WTC11 (cell line): ENCODE measurements at regions of chr19 and their contacts with region 1.

Region 1: DNA sequence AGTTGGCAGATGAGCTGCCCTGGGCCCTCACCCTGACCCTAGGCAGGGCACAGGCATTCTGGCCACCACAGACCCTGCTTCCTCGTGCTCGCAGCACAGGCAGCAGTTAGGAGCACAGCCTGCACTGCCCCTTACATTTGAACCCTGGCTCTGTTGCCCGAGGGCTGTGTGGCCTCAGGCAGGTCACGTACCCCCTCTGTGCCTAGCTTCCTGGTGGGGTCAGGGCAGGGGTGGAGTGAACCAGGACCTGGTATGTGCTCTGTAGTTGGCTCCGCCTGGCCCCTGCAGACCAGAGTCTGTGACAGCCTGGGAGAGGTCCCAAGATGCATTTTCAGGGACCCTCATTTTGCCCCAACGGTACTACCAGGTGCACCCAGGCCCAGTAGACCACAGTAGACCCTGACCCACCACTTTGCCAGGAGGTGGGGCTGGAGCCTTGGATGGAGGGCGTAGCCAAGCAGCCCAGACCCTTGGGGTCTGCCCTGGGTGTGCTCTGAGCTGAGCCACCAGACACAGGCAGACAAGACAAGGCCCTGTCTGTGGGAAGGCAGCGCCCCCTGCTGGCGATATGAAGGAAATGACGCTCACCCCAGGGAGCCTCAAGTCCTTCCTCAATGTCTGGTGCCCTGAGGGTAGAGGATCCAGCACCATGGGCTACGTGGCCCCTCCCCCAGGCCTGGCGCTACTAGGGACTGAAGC is 9.1 kb downstream of the LYL1 start:
- DNase-seq: peak; percentile 84
- ATAC-seq: peak; percentile 41
- H3K4me3 Mint-ChIP-seq: no peak overlapping the region; the same call in 1 of the 2 replicates
- H3K27ac Mint-ChIP-seq: no peak overlapping the region
- H3K4me1 Mint-ChIP-seq: peaks cover 39% of the 10 kb centered on the region
- H3K27me3 Mint-ChIP-seq: peaks cover 52% of the 10 kb centered on the region
- CTCF ChIP-seq: peak; percentile 100

Region 2: GRCh38 chr19:12881172-12881808 is 212.3 kb before region 1 on chr19 and contains the start of gene DNASE2:
- CTCF ChIA-PET with region 1: interaction called, 10 read pairs
- POLR2A ChIA-PET with region 1: interaction called, 3 read pairs
- DNase-seq: peak; percentile 97
- ATAC-seq: peak; percentile 66
- H3K4me3 Mint-ChIP-seq: peak within 1 kb of the TSS; percentile 90
- H3K27ac Mint-ChIP-seq: peak within 1 kb of the TSS; percentile 94
- H3K4me1 Mint-ChIP-seq: peaks cover 8% of the 10 kb centered on the region
- H3K27me3 Mint-ChIP-seq: peaks cover 30% of the 10 kb centered on the region
- CTCF ChIP-seq: no peak
- total RNA-seq, gene DNASE2: 31.7 to 35.7 TPM (median 33.4 TPM) in 3 replicates

Region 3: GRCh38 chr19:12930002-12930653 is 163.4 kb before region 1 on chr19:
- CTCF ChIA-PET with region 1: no interaction called
- POLR2A ChIA-PET with region 1: no interaction called
- DNase-seq: no peak
- ATAC-seq: no peak
- H3K4me3 Mint-ChIP-seq: no peak overlapping the region
- H3K27ac Mint-ChIP-seq: no peak overlapping the region
- H3K4me1 Mint-ChIP-seq: peaks cover 16% of the 10 kb centered on the region
- H3K27me3 Mint-ChIP-seq: no peaks in the 10 kb centered on the region
- CTCF ChIP-seq: no peak

Region 4: DNA sequence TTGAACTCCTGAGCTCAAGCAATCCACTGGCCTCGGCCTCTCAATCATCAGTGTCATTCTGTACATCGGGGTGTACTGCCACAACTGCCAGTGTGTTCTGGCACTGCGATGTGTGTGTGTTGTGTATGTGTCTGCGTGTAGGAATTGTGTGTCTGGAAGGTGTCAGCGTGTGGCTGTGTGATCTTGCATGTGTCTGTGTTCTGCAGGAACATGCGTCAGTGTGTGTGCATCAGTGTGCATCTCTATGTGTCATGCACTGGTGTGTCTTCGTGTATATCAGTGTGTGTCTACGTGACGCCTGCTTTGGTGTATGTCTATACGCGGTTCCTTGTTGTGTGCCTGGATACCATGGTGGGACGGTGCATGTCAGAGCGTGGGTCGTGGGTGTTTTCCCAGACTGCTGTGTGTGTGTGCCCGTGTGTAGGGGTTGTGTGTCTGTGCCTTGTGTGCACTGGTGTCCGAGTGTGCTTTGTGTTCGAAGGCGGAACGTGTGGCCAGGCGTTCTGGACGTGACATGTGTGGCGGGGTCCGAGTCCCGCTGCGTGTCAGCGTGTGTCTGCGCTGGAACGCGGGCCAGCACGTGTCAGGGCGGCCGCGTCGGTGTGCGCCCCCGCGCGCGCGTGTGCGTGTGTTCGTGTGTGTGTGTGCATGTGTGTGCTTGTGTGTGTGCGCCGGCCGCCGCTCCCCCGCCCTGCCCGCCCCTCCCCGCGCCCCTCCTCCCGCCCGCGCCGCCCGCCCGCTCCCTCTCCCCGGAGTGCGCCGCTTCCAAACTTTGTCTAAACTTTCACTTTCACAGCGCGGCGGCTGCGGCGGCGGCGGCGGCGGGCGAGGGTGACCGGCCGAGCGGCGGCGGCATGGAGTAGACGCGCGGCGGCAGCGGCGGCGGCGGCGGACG is 98.6 kb before region 1 on chr19 and contains the start of gene NFIX:
- CTCF ChIA-PET with region 1: interaction called, 11 read pairs
- POLR2A ChIA-PET with region 1: no interaction called
- DNase-seq: no peak
- ATAC-seq: no peak
- H3K4me3 Mint-ChIP-seq: peak within 1 kb of the TSS; percentile 70
- H3K27ac Mint-ChIP-seq: no peak within 1 kb of the TSS
- H3K4me1 Mint-ChIP-seq: peaks cover 9% of the 10 kb centered on the region
- H3K27me3 Mint-ChIP-seq: peaks cover 90% of the 10 kb centered on the region
- CTCF ChIP-seq: no peak
- total RNA-seq, gene NFIX: 0.44 to 1.5 TPM (median 1.4 TPM) in 3 replicates

Region 5: GRCh38 chr19:13012690-13013608 is 80.6 kb before region 1 on chr19:
- CTCF ChIA-PET with region 1: interaction called, 12 read pairs
- POLR2A ChIA-PET with region 1: interaction called, 3 read pairs
- DNase-seq: peak; percentile 44
- ATAC-seq: no peak
- H3K4me3 Mint-ChIP-seq: peak overlapping the region; percentile 58
- H3K27ac Mint-ChIP-seq: no peak overlapping the region
- H3K4me1 Mint-ChIP-seq: peaks cover 59% of the 10 kb centered on the region
- H3K27me3 Mint-ChIP-seq: peaks cover 100% of the 10 kb centered on the region
- CTCF ChIP-seq: no peak

Region 6: DNA sequence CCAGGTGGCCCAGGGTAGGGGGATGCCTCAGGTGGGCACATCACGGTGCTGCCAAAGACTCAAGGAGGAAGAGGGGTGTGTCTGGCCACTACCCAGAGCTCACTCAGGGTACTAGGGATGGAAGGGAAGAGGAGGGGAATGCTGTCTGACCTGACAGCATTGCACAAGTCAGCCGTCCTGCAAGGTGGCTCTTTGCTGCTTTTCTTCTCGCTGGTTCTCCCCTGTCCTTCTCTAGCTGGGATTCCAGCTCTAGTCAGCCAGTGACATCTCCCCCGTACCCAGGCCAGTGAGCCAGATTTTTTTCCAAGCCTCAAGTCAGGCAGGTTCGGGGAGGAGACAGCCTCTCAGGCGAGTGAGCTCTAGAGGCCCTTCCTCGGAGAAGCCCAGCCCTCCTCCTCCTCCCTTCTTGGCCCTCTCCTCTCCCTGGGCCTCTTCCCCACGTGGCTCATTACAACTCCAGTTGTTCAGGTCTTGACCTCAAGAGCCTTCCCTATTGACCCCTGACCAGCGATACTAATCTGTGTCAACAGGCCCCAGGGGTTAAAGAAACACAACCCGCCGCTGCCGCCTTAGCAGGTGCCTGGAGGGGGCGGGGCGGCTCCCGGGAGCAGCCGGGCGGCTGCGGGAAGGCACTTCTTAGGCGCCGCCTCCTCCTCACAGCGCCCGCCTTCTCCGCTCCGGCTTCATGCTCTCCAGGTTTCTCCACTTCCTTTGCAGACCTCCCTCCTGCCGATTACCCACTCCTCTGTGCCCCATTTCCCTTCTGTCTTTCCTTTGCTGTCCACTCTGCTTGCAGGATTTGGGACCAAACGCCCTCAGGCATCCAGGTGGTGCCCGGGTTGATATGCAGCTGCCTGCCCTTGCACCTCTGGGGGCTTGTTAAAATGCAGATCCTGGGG is 42.0 kb before region 1 on chr19:
- CTCF ChIA-PET with region 1: interaction called, 177 read pairs
- POLR2A ChIA-PET with region 1: interaction called, 3 read pairs
- DNase-seq: peak; percentile 89
- ATAC-seq: peak; percentile 79
- H3K4me3 Mint-ChIP-seq: peak overlapping the region; percentile 57
- H3K27ac Mint-ChIP-seq: no peak overlapping the region
- H3K4me1 Mint-ChIP-seq: peaks cover 42% of the 10 kb centered on the region
- H3K27me3 Mint-ChIP-seq: peaks cover 99% of the 10 kb centered on the region
- CTCF ChIP-seq: no peak

Region 7: DNA sequence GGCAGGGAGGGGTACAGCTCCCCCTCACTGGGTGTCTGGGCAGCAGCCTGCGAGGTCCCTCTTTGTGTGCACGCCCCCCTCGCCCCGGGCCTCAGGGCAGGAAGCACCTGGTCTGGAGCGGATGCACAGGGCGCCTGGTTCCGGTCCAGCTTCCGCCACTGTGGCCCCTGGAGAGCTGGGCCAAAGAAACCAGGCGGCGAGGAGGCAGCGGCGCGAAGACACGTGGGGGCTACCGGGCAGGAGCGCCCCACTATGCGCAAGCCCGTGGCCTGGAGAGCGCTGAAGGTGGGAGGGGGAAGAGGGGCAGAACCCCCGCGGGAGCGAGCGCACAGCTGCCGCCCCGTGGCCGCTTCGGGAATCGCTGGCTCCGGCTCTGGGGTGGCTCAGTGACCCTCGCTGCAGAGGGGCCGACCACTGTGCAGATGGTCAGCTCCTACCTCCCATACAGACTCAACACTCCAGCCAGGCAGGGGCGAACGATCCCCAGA is 10.8 kb after region 1 on chr19:
- CTCF ChIA-PET with region 1: interaction called, 34 read pairs
- POLR2A ChIA-PET with region 1: interaction called, 3 read pairs
- DNase-seq: peak; percentile 82
- ATAC-seq: peak; percentile 57
- H3K4me3 Mint-ChIP-seq: no peak overlapping the region
- H3K27ac Mint-ChIP-seq: no peak overlapping the region; the same call in 1 of the 2 replicates
- H3K4me1 Mint-ChIP-seq: peaks cover 4% of the 10 kb centered on the region
- H3K27me3 Mint-ChIP-seq: peaks cover 30% of the 10 kb centered on the region
- CTCF ChIP-seq: peak; percentile 73